Dorsolateral prefrontal cortex (tissue), 120 donors: ENCODE measurements at regions of chr7 and their contacts with region 1.

Region 1: GRCh38 chr7:65892835-65893234 is 20.0 kb downstream of the VKORC1L1 start:
- DNase-seq: no peak
- H3K4me3 ChIP-seq: no peak overlapping the region
- H3K27ac ChIP-seq: no peak overlapping the region
- H3K27me3 ChIP-seq: no peaks in the 10 kb centered on the region
- CTCF ChIP-seq: no peak

Region 2: GRCh38 chr7:65798111-65799075 is 94.4 kb before region 1 on chr7:
- intact Hi-C with region 1: loop called in 1 of 2 experiments (anchors 10 kb)
- DNase-seq: no peak
- H3K4me3 ChIP-seq: no peak overlapping the region
- H3K27ac ChIP-seq: no peak overlapping the region
- H3K27me3 ChIP-seq: no peaks in the 10 kb centered on the region
- CTCF ChIP-seq: no peak

Region 3: GRCh38 chr7:65946895-65947294 is 54.1 kb after region 1 on chr7:
- intact Hi-C with region 1: no loop called
- DNase-seq: no peak
- H3K4me3 ChIP-seq: no peak overlapping the region
- H3K27ac ChIP-seq: no peak overlapping the region
- H3K27me3 ChIP-seq: no peaks in the 10 kb centered on the region
- CTCF ChIP-seq: no peak